Activated T-helper 1 cell treated with anti-CD3 and anti-CD28 coated beads, Interleukin-12 subunit alpha, Interleukin-12 subunit beta, Interleukin-2, Interleukin-4 antibody, amounts not matched to agents 30 ng/mL and 10 ng/mL and 1 ng/mL, durations not matched to agents 14 hours and 24 hours and 36 hours (primary cell): ENCODE measurements at regions of chr14 and their contacts with region 1.

Region 1: DNA sequence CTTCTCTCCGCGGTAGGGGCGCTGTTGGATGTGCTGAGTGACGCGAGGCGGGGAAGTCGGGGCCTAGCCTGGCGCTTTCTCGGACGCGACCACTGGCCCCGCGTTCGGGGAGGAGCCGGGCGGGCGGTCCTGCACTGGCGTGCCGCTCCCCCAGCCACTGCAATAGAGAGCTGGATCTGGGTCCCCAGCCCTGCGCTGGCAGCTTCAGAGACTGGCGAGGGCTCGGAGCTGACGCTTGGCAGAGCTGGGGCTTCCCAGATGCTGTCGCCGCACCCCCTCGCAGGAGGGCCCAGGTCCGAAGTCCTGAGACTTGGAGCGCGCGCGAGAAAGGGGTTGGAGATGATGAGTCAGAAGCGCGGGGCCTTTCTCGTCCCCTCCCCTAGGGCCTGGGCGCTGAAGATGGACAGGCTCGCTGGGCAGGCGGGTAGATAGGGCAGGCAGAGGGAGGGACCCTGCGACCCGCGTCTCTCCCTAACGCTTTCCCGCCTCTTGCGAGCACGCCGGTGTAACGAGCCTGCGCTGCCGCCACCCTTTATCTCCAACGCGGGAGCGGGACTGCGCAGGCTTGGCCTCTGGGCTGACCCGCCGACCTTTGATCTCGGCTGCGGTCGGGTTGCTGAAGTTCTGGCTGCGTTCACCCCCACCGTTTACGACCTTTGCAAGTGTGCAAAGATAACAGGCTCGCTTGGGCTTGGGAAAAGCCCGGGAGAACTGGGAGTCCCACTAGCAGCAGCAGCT is 3.0 kb downstream of the TMEM253 start:
- DNase-seq: peak; percentile 92
- H3K4me3 Mint-ChIP-seq: peak overlapping the region; percentile 93
- H3K27ac Mint-ChIP-seq: peak overlapping the region; percentile 97
- H3K4me1 Mint-ChIP-seq: peaks cover 56% of the 10 kb centered on the region
- H3K27me3 Mint-ChIP-seq: peaks cover 6% of the 10 kb centered on the region

Region 2: DNA sequence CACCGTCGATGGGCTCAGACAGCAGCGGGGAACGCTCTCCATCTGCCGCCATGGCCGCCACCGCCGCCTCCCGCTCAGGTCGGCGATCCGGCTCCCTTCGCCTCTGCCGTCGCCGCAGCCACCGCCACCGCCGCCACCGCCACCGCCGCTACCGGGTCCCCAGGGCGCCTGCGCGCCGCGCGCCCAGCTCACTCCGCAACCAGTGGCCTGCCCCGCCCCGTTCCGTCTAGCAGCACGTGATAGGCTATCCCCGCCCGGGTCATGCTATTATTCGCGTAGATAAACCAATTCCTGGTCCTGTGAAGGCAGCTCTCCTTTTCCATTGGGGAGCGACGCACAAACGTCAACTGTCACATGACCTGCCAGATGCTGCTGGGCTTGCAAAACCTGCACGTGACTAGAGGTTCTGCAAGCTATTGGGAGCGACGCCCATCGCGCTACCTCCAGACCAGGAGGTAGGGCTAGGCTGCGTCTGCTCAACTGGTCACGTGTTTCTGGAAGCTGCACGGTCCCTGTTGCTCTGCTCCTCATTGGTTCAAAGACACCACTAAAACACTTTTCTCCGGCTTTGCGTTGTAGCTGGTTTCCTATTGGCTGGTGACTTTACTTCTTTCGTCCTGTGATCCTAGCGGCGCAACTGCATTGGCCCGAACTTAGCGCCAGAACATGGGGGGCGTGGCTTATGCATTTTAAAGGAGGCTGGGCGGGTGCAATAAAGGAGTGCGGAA is 642.4 kb before region 1 on chr14 and contains the start of gene PIP4P1:
- intact Hi-C with region 1: loop called (anchors 5 kb)
- DNase-seq: peak; percentile 99
- H3K4me3 Mint-ChIP-seq: peak within 1 kb of the TSS; percentile 94
- H3K27ac Mint-ChIP-seq: peak within 1 kb of the TSS; percentile 87
- H3K4me1 Mint-ChIP-seq: peaks cover 23% of the 10 kb centered on the region
- H3K27me3 Mint-ChIP-seq: no peaks in the 10 kb centered on the region
- total RNA-seq, gene PIP4P1: 36.6 and 37.0 TPM in 2 replicates

Region 3: DNA sequence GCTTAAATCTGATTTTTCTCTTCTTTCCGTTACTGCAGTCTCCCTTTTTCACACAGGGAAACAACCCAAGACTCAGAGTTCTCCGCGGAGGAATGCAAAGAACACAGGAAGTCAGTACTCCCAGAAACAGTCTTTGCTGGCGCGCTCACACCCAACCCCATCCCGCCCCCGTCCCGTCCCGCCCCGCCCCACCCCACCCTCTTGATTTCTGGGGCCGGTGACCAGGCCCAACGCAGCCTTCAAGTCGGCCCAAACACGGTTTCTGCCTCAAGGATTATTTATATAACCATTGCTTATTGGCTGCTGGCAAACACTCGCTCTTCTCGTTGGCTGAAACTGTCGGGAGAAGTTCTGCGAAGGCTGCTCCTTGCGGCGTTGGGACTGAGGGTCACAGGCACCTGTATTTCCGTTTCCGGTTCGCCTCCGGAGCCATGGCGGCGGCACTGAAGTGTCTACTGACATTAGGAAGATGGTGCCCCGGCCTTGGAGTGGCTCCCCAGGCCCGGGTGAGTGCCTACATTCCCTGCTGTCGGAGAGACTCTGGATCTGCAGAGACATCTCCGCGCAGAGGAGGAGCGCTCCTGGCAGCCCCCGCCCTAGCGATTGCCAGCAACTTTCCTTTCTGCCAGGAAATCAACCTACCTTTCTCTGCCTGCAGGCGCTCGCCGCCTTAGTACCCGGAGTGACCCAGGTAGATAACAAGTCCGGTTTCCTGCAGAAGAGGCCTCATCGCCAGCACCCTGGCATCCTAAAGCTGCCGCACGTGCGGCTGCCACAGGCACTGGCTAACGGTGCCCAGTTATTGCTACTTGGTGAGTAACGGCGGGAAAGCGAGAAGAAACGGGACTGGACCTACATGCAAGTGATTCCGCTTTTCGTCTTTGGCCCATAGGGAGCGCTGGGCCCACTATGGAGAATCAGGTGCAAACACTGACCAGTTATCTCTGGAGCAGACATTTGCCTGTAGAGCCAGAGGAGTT is 114.0 kb before region 1 on chr14 and contains the start of gene METTL17:
- intact Hi-C with region 1: loop called (anchors 1 kb)
- DNase-seq: peak; percentile 83
- H3K4me3 Mint-ChIP-seq: peak within 1 kb of the TSS; percentile 96
- H3K27ac Mint-ChIP-seq: peak within 1 kb of the TSS; percentile 85
- H3K4me1 Mint-ChIP-seq: peaks cover 25% of the 10 kb centered on the region
- H3K27me3 Mint-ChIP-seq: no peaks in the 10 kb centered on the region
- total RNA-seq, gene METTL17: 96.1 and 100 TPM in 2 replicates

Region 4: GRCh38 chr14:21068521-21069387 is 35.1 kb before region 1 on chr14:
- intact Hi-C with region 1: loop called (anchors 1 kb)
- DNase-seq: no peak
- H3K4me3 Mint-ChIP-seq: peak overlapping the region; percentile 70
- H3K27ac Mint-ChIP-seq: peak overlapping the region; percentile 29
- H3K4me1 Mint-ChIP-seq: peaks cover 32% of the 10 kb centered on the region
- H3K27me3 Mint-ChIP-seq: peaks cover 70% of the 10 kb centered on the region

Region 5: GRCh38 chr14:21092273-21093011 is 11.4 kb before region 1 on chr14:
- intact Hi-C with region 1: loop called (anchors 1 kb)
- DNase-seq: peak; percentile 87
- H3K4me3 Mint-ChIP-seq: no peak overlapping the region
- H3K27ac Mint-ChIP-seq: no peak overlapping the region
- H3K4me1 Mint-ChIP-seq: peaks cover 23% of the 10 kb centered on the region
- H3K27me3 Mint-ChIP-seq: peaks cover 8% of the 10 kb centered on the region

Region 6: GRCh38 chr14:21149641-21150367 is 45.9 kb after region 1 on chr14:
- intact Hi-C with region 1: no loop called
- DNase-seq: no peak
- H3K4me3 Mint-ChIP-seq: no peak overlapping the region
- H3K27ac Mint-ChIP-seq: no peak overlapping the region
- H3K4me1 Mint-ChIP-seq: no peaks in the 10 kb centered on the region
- H3K27me3 Mint-ChIP-seq: peaks cover 2% of the 10 kb centered on the region